ENCODE measurements at regions of chr10 and their contacts with region 1.

Region 1: GRCh38 chr10:89351780-89352597 is 24.2 kb downstream of the IFIT3 start:
- DNase-seq: peak; percentile 24
- CTCF ChIP-seq: no peak

Region 2: DNA sequence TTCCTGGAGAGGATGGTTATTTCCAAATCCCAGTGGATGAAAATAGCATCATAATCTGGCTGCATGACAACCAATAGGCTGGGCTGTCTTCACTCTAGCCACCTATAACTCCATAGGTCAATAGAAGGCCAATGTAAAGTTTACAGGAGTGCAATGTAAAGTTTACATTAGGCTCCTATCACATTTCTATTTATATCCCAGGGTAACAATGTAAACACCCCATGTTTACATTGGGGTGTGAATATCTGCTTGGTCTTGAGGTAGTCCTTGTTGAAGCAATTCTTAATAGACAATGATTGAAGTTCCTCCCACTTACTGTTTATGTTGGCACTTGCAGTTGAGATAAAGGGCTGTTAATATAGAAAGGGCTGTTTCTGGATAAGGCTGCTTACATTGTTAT is 166.3 kb before region 1 on chr10:
- CTCF ChIA-PET with region 1: no interaction called
- POLR2A ChIA-PET with region 1: no interaction called
- DNase-seq: no peak
- CTCF ChIP-seq: no peak

Region 3: DNA sequence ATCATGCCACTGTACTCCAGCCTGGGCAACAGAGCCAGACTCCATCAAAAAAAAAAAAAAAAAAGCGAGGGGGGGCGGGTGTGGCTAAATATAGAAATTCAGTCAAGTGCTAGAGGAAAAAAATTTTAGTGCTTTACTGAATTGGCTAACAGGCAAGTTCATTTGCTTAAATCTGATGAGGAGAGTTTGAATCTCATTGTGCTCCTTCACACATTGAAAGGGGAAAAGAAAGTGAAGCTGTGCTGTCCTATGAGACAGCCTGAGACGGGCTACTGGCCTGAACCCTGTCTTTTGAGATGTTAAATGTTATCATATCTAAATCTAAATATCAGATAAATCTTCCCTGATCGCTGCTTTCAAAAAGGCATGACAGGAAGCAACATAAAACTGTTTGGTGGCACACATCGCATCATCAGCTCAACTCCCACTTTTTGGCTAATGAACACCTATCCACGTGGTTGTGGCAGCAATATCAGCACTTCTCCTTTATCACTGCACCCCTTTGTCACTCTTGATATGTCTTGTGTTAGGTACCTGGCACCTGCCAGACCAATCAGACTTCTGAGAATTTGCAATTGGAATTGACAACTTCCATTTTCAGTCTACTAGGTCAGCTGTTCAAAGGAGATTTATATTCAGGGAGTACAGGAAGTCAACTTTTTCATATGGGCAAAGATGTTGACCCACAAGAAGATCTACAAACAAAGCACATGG is 11.9 kb after region 1 on chr10:
- CTCF ChIA-PET with region 1: interaction called, 46 read pairs
- POLR2A ChIA-PET with region 1: no interaction called
- DNase-seq: no peak
- CTCF ChIP-seq: no peak